ENCODE measurements at regions of chr10 and their contacts with region 1.

Region 1: GRCh38 chr10:52890281-52890680 is 117.7 kb upstream of the MBL2 start:
- DNase-seq: no peak
- ATAC-seq: no peak

Region 2: DNA sequence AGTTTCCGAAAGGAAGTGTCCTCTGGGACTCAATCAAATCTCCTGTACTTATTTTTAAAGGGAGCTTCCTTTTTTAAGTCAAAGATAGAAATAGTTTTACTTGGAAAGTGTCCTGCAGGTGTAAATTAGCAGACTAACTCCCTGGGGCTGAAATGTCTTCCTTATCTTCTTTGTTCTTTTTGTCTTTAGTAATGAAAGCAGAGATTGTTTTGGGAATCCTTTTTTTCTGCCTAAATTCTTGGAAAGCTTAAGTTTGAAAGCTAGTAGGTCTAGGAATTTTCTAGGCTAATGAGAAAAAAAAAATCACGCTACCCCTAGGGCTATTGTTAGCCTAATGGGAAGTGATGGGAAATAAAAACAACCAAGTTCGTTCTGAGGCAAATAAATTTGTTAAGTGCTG is 1051.8 kb before region 1 on chr10:
- intact Hi-C with region 1: loop called (anchors 5 kb)
- DNase-seq: no peak
- ATAC-seq: no peak

Region 3: GRCh38 chr10:52949899-52950298 is 59.6 kb after region 1 on chr10:
- intact Hi-C with region 1: loop called (anchors 5 kb)
- DNase-seq: no peak
- ATAC-seq: no peak